PC-3 (cell line): ENCODE measurements at regions of chr16 and their contacts with region 1.

Region 1: DNA sequence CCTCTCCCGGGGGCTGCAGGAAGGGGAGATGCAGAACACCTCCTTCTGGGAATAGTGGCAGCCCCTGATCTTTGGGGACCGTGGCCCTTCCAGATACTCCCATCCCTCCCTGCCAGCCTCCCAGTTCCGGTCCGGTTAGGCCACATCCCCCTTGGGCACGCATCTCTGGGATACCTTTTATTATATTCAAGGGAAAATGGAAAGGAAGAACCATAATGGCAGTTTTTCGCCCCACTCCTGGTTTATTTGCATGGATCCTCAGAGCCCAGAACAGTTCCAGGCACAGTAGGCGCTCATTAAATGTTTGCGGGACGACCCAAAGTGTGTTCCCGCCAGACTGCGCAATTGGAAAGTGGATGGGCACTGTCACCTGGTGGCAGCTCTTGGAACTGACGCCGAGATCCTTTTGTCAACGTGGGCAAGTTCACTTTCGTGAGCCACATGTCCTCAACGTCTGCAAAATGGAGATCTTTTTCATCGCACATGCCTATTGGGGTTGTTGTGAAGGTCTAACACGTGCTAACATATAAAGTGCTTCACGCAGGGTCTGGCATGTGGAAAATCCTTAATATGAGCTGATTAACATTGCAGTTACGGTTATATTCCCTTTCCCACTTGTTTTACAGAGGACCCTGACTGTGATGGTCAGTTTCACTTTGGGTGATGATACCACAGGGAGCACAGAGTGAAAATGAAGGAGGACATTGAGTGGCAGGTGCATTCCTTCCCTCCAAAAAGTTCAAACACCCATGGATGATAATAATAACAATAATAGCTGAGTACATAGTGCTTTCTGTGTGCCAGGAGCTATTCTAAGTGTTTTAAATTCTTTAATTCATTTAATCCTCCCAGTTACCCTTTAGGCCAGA is 1.7 kb upstream of the GPRC5B start:
- DNase-seq: peak; percentile 83
- ATAC-seq: peak; percentile 36
- H3K4me3 ChIP-seq: no peak overlapping the region
- H3K27ac ChIP-seq: no peak overlapping the region
- H3K4me1 ChIP-seq: peaks cover 4% of the 10 kb centered on the region; the same call in 1 of the 2 replicates
- H3K27me3 ChIP-seq: no peaks in the 10 kb centered on the region
- CTCF ChIP-seq: peak; percentile 95

Region 2: GRCh38 chr16:19601083-19601976 is 285.0 kb before region 1 on chr16:
- CTCF ChIA-PET with region 1: interaction called, 7 read pairs
- POLR2A ChIA-PET with region 1: no interaction called
- intact Hi-C with region 1: loop called (anchors 1 kb)
- DNase-seq: peak; percentile 47
- ATAC-seq: no peak
- H3K4me3 ChIP-seq: no peak overlapping the region
- H3K27ac ChIP-seq: no peak overlapping the region
- H3K4me1 ChIP-seq: peaks cover 21% of the 10 kb centered on the region; the same call in 1 of the 2 replicates
- H3K27me3 ChIP-seq: no peaks in the 10 kb centered on the region
- CTCF ChIP-seq: peak; percentile 79

Region 3: GRCh38 chr16:19735074-19735867 is 151.0 kb before region 1 on chr16:
- CTCF ChIA-PET with region 1: no interaction called
- POLR2A ChIA-PET with region 1: no interaction called
- intact Hi-C with region 1: no loop called
- DNase-seq: no peak
- ATAC-seq: no peak
- H3K4me3 ChIP-seq: no peak overlapping the region
- H3K27ac ChIP-seq: no peak overlapping the region
- H3K4me1 ChIP-seq: no peaks in the 10 kb centered on the region
- H3K27me3 ChIP-seq: no peaks in the 10 kb centered on the region
- CTCF ChIP-seq: no peak

Region 4: DNA sequence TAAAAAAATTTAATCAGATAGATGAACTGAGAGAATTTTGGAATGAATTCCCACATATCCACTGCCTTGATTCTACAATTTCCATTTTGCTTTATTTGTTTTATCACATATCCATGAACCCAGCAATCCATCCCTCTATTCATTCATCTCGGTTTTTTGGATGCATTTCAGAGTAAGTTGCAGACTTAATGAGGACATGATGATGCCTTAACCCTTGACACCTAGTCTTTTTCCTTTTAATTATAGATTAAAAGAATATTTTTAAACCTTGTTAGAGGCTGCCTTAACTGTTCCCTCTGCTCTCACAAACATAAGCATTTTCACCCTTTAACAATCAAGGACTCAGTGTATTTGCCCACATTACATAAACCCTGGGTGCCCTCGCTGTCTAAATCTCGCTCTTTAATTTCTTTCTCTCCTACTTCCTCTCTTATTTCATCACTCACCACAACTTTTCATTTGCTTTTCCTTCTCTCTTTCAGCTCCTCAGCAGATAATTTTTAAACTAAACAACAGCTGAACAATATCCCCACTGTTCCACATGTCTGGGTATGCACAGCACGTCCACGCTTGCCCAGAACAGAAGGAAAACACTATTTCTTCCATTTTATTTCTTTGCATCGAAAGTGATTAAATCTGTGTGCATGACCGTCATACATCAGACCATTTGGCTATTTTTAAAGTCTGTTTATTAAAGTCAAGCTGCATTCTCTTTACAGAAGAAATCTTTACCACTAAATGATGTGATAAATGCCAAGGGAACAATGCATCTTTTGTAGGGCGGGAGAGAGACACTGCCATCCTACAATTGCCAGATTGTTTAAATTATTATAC is 128.3 kb before region 1 on chr16:
- CTCF ChIA-PET with region 1: no interaction called
- POLR2A ChIA-PET with region 1: no interaction called
- intact Hi-C with region 1: no loop called
- DNase-seq: no peak
- ATAC-seq: no peak
- H3K4me3 ChIP-seq: no peak overlapping the region
- H3K27ac ChIP-seq: no peak overlapping the region
- H3K4me1 ChIP-seq: peaks cover 24% of the 10 kb centered on the region
- H3K27me3 ChIP-seq: no peaks in the 10 kb centered on the region
- CTCF ChIP-seq: no peak

Region 5: GRCh38 chr16:20089246-20089965 is 203.1 kb after region 1 on chr16:
- CTCF ChIA-PET with region 1: no interaction called
- POLR2A ChIA-PET with region 1: no interaction called
- intact Hi-C with region 1: no loop called
- DNase-seq: no peak
- ATAC-seq: no peak
- H3K4me3 ChIP-seq: no peak overlapping the region
- H3K27ac ChIP-seq: no peak overlapping the region
- H3K4me1 ChIP-seq: no peaks in the 10 kb centered on the region
- H3K27me3 ChIP-seq: no peaks in the 10 kb centered on the region
- CTCF ChIP-seq: no peak

Region 6: DNA sequence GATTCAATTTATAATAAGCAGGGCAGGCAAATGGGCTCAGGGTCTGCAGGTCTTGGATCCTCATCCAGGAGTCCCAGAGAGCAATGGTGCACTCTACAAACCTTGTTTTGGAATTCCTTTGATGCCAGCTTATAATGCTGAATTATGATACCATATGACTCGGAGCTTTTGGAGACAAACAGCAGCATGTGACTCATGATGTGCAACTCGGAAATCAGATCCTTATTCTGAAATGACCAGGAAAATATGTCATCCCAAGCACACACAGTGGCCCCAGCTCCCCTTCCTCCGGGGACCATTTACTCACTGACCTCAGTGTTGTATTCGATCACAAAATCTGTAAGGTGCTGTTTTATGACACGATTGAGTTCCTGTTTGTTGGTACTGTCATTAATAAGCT is 486.4 kb after region 1 on chr16:
- CTCF ChIA-PET with region 1: no interaction called
- POLR2A ChIA-PET with region 1: no interaction called
- intact Hi-C with region 1: no loop called
- DNase-seq: peak; percentile 48
- ATAC-seq: no peak
- H3K4me3 ChIP-seq: no peak overlapping the region
- H3K27ac ChIP-seq: no peak overlapping the region
- H3K4me1 ChIP-seq: no peaks in the 10 kb centered on the region
- H3K27me3 ChIP-seq: no peaks in the 10 kb centered on the region
- CTCF ChIP-seq: no peak